IMR-90 (cell line): ENCODE measurements at regions of chr1 and their contacts with region 1.

Region 1: GRCh38 chr1:160862203-160863060 is at the start of gene CD244:
- DNase-seq: no peak
- ATAC-seq: no peak
- H3K4me3 ChIP-seq: no peak within 1 kb of the TSS
- H3K27ac ChIP-seq: no peak within 1 kb of the TSS
- H3K4me1 ChIP-seq: no peaks in the 10 kb centered on the region
- H3K27me3 ChIP-seq: no peaks in the 10 kb centered on the region
- CTCF ChIP-seq: no peak
- POLR2A ChIP-seq: no peak
- RAD21 ChIP-seq: no peak
- total RNA-seq, gene CD244: not detected in 2 replicates

Region 2: GRCh38 chr1:160911925-160912324 is 49.5 kb after region 1 on chr1:
- CTCF ChIA-PET with region 1: interaction called, 10 read pairs
- POLR2A ChIA-PET with region 1: no interaction called
- dilution Hi-C with region 1: no loop called
- in situ Hi-C with region 1: no loop called
- intact Hi-C with region 1: no loop called
- DNase-seq: no peak
- ATAC-seq: no peak
- H3K4me3 ChIP-seq: no peak overlapping the region
- H3K27ac ChIP-seq: no peak overlapping the region
- H3K4me1 ChIP-seq: no peaks in the 10 kb centered on the region
- H3K27me3 ChIP-seq: no peaks in the 10 kb centered on the region; the same call in 1 of the 2 replicates
- CTCF ChIP-seq: no peak
- POLR2A ChIP-seq: no peak
- RAD21 ChIP-seq: no peak

Region 3: DNA sequence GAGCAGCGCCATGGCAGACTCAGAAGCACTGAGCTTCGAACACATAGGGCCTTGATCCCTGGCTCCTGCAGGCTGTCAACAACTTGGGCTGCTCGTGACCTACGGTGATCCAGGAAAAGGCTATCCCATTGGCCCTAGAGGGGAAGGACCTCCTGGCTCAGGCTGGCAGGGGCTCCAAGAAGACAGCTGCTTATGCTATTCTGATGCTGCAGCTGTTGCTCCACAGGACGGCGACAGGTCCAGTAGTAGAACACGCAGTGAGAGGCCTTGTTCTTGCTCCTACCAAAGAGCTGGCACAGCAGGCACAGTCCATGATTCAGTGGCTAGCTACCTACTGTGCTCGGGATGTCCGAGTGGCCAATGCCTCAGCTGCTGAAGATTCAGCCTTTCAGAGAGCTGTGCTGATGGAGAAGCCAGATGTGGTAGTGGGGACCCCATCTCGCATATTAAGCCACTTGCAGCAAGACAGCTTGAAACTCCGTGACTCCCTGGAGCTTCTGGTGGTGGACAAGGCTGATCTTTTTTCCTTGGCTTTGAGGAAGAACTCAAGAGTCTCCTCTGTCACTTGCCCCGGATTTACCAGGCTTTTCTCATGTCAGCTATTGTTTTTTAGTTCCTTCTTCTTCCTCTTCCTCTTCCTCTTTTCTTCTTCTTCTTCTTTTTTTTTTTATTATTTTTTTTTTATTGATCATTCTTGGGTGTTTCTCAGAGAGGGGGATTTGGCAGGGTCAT is 73.3 kb after region 1 on chr1:
- CTCF ChIA-PET with region 1: no interaction called
- POLR2A ChIA-PET with region 1: no interaction called
- dilution Hi-C with region 1: no loop called
- in situ Hi-C with region 1: no loop called
- intact Hi-C with region 1: loop called (anchors 2 kb)
- DNase-seq: no peak
- ATAC-seq: no peak
- H3K4me3 ChIP-seq: no peak overlapping the region
- H3K27ac ChIP-seq: no peak overlapping the region
- H3K4me1 ChIP-seq: no peaks in the 10 kb centered on the region
- H3K27me3 ChIP-seq: no peaks in the 10 kb centered on the region
- CTCF ChIP-seq: no peak
- POLR2A ChIP-seq: no peak
- RAD21 ChIP-seq: no peak

Region 4: DNA sequence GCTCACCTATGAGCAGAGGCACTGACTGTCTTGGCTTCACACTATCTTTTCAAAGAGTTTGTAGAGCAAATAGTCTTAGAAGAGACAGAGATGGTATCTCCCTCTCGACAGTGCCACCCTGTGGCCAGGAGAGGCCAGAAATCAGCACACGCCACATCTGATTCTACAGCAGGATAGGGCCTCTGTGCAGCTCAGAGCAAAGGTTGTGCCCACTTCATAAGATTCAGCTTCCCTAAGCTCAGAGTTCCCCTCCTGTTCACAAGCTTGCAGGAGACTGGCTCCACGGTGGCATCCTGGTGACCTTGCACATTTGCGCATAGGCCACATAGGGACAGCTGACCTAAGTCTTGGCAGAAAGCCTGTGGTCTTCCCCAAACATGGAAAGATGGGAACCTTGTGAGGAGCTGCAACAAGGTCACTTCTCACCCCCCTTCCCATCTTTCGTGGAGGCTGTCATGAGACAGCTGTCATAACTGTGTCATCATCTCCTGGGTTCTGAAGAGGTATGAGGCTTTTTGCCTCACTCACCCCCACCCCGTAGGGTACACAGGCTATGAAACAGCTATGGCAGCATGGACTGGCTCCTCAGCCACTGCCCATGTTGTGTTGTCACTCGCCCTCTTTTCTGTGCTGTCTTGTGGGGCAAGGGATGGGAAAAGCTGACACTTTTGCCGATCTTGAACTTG is 89.2 kb after region 1 on chr1:
- CTCF ChIA-PET with region 1: no interaction called
- POLR2A ChIA-PET with region 1: no interaction called
- dilution Hi-C with region 1: no loop called
- in situ Hi-C with region 1: no loop called
- intact Hi-C with region 1: no loop called
- DNase-seq: peak; percentile 41
- ATAC-seq: peak; percentile 93
- H3K4me3 ChIP-seq: no peak overlapping the region
- H3K27ac ChIP-seq: no peak overlapping the region
- H3K4me1 ChIP-seq: no peaks in the 10 kb centered on the region
- H3K27me3 ChIP-seq: peaks cover 4% of the 10 kb centered on the region; the same call in 1 of the 2 replicates
- CTCF ChIP-seq: peak; percentile 61
- POLR2A ChIP-seq: no peak
- RAD21 ChIP-seq: peak; percentile 52